CD4-positive, alpha-beta memory T cell (primary cell): ENCODE measurements at regions of chr16 and their contacts with region 1.

Region 1: DNA sequence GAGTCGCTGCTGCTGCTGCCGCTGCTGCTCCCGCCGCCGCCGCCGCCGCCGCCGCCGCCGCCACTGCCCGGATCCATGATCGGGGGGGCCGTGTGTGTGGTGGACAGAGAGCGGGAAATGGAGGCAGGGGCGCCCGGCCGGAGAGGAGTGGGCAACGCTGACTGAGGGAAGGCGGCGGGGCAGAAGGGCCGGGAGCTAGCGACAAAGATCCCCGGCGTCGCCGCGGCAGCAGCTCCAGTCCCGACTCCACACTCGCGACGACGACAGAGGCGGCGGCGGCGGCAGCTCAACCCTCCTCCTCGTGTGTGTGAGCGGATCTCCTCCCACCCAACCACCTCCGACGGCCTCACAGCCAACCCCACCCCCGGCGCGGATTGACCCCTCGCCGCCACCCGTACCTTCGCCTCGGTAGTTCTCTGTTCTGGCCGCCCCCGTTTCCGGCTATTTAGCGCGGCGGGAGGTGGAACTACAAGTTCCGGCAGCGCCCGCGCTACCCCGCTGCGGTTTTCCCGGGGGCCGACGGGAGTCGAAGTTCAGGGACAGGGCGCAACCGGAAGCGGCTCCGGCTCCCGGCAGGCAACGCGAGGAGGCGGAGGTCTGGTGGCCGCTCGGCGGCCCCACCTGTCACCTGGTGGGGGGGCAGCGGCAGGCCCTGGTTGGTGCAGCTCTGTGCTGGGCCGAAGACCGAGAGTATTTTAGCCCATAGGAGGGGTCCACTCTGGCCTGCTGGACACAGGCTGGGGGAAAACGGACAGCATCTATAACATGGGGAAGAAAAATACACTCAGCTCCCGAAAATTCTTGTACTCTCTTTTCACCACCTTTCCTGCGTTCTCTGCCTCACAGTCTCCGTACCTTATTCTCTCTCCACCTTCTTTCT is at the start of gene GSPT1:
- DNase-seq: peak; percentile 99 to 100 (median 99)
- H3K4me3 ChIP-seq: peak within 1 kb of the TSS; percentile 67 to 72
- H3K4me3 Mint-ChIP-seq: peak within 1 kb of the TSS; percentile 94 to 99 (median 98)
- H3K27ac ChIP-seq: peak within 1 kb of the TSS; percentile 72
- H3K27ac Mint-ChIP-seq: peak within 1 kb of the TSS; percentile 96 to 100 (median 97)
- H3K4me1 ChIP-seq: peaks cover 35% of the 10 kb centered on the region
- H3K4me1 Mint-ChIP-seq: peaks cover 24 to 45% (median 30%) of the 10 kb centered on the region in 4 donors
- H3K27me3 ChIP-seq: no peaks in the 10 kb centered on the region
- H3K27me3 Mint-ChIP-seq: peaks cover 0 to 2% of the 10 kb centered on the region in 2 donors
- total RNA-seq, gene GSPT1: 97.9 to 99.5 TPM

Region 2: DNA sequence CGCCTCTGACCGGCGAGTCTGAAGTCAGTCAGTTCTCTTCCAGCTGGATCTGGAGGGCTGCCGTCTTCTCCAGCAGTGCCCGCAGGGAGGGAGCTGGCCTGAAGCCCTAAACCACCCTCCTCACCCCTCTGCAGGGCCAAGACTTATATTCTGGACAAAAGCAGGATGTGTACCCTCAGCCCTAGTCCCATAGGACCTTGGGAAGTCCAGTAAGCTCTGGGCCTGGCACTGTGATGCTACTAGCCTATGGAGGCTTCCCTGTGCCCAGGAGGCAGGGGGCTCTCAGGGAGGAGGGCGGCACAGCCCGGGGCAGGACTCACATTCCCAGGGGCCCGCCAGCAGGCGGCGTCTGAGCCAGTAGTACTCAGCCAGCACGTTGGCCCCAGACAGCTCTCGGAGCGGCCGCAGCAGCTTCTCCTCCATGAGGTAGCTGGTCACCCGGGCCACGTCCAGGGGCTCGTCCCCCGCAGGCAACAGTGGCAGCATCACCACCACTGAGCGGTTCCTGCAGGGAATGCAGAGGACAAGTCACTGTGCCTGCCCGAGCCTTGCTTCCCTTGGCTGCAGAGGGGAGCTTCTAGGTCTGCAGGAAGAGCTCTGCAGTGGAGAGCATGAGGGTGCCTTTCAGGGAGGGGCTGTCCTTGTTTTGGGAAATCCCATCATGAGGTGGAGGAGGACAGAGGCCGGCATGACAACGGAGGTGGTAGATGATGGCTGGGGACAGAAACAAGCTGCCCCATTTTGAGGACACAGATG is 528.9 kb before region 1 on chr16:
- CTCF ChIA-PET with region 1: no interaction called
- POLR2A ChIA-PET with region 1: no interaction called
- intact Hi-C with region 1: no loop called
- DNase-seq: no peak
- H3K4me3 ChIP-seq: no peak overlapping the region
- H3K4me3 Mint-ChIP-seq: no peak overlapping the region
- H3K27ac ChIP-seq: no peak overlapping the region
- H3K27ac Mint-ChIP-seq: no peak overlapping the region
- H3K4me1 ChIP-seq: no peaks in the 10 kb centered on the region
- H3K4me1 Mint-ChIP-seq: peaks cover 0 to 2% (median 0%) of the 10 kb centered on the region in 4 donors
- H3K27me3 ChIP-seq: no peaks in the 10 kb centered on the region
- H3K27me3 Mint-ChIP-seq: no peaks in the 10 kb centered on the region

Region 3: DNA sequence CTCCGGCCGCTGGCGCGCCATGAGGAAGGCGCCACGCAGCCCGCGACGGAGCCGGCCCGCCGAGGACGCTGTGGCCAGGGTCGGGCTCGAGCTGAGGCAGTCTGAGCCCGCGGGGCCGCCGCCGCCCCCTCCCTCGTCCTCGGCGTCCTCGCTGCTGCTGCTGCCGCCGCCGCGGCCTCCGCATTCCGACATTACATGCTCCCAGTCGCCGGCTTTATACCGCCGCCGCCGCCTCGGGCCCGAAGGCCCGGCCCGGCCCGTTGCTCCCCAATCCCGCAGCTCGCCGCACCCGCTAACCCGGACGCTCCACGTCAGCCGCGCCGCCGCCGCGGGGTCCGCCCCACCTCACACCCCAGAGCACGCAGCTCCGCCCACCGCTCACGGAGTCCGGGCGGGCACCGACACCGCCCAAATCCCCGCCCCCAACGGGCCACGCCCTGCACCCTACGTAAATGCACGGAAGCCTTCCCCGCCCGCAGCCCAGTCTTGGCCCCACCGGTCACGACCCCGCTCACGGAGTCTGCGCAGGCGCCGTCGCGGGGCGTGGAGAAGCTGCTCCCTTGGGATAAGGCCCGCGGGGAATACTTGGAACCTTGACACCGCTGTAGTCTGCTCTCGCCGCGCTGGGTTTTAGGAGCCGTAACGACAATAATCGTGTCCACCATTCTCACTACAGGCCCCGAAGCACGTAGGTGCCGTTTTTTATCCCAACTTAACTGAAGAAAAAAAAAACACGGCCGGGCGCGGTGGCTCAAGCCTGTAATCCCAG is 173.2 kb before region 1 on chr16 and contains the start of gene TXNDC11:
- CTCF ChIA-PET with region 1: no interaction called
- POLR2A ChIA-PET with region 1: interaction called, 21 read pairs
- intact Hi-C with region 1: loop called (anchors 2 kb)
- DNase-seq: peak; percentile 98 to 100 (median 99)
- H3K4me3 ChIP-seq: peak within 1 kb of the TSS; percentile 57 to 91
- H3K4me3 Mint-ChIP-seq: peak within 1 kb of the TSS; percentile 94 to 98 (median 95)
- H3K27ac ChIP-seq: peak within 1 kb of the TSS; percentile 88
- H3K27ac Mint-ChIP-seq: peak within 1 kb of the TSS; percentile 96 to 99 (median 98)
- H3K4me1 ChIP-seq: peaks cover 53% of the 10 kb centered on the region
- H3K4me1 Mint-ChIP-seq: peaks cover 39 to 60% (median 48%) of the 10 kb centered on the region in 4 donors
- H3K27me3 ChIP-seq: no peaks in the 10 kb centered on the region
- H3K27me3 Mint-ChIP-seq: no peaks in the 10 kb centered on the region
- total RNA-seq, gene TXNDC11: 51.7 to 59.8 TPM

Region 4: DNA sequence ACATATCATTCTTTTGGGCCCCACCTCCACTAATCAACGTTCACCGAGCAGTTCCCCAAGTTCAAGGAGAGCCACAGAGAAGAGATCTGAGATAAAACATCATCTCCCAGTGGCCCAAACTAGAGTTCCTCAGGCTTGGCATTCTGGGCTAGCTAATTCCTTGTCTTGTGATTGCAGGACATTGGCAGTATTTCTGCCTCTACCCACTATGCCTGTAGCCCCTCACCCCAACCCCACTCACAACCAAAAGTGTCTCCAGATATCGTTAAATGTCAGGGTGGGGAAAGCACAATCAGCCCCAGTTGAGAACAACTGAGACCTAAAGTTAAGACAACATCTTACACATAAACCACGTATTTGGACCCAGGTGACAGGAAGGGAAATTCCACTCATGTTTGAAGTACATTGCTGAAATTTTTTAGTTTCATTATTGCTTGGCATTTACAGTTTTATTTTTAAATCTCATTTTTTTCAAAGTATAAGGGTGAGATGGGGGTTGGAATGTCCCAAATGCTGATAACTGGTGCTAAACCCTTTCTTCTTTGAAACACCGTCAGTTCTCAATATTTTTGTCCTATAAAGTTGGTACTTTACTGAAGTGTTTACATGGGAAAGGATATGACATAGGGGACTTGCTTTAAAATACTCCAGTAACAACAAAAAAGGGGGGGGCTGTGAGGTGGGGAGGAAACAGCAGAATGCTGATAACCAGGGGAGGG is 132.4 kb before region 1 on chr16:
- CTCF ChIA-PET with region 1: no interaction called
- POLR2A ChIA-PET with region 1: interaction called, 3 read pairs
- intact Hi-C with region 1: loop called (anchors 2 kb)
- DNase-seq: peak; percentile 79 to 88 (median 84)
- H3K4me3 ChIP-seq: peak overlapping the region; percentile 58 to 87
- H3K4me3 Mint-ChIP-seq: peak overlapping the region; percentile 82 to 90 (median 86)
- H3K27ac ChIP-seq: peak overlapping the region; percentile 96
- H3K27ac Mint-ChIP-seq: peak overlapping the region; percentile 97 to 100 (median 98)
- H3K4me1 ChIP-seq: peaks cover 75% of the 10 kb centered on the region
- H3K4me1 Mint-ChIP-seq: peaks cover 42 to 66% (median 53%) of the 10 kb centered on the region in 4 donors
- H3K27me3 ChIP-seq: no peaks in the 10 kb centered on the region
- H3K27me3 Mint-ChIP-seq: no peaks in the 10 kb centered on the region

Region 5: DNA sequence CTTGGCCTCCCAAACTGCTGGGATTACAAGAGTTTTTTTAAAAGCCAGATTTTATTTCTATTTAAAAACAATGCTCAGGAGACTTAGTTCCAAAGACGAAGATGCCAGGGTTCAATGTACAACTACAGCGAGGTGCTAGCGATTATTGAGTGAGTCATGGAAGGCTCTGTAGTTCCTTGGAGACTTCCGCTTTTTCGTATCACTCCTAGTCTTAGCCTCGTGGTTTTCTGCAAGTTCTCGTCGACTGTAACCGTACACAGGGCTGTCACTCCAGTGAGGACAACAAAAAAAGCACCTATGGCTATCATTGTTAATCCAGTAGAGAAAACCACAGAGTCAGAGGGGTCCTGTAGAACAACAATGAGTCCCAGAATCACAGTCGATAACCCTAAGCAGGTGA is 96.1 kb before region 1 on chr16:
- CTCF ChIA-PET with region 1: no interaction called
- POLR2A ChIA-PET with region 1: no interaction called
- intact Hi-C with region 1: no loop called
- DNase-seq: no peak
- H3K4me3 ChIP-seq: no peak overlapping the region
- H3K4me3 Mint-ChIP-seq: no peak overlapping the region
- H3K27ac ChIP-seq: no peak overlapping the region
- H3K27ac Mint-ChIP-seq: no peak overlapping the region
- H3K4me1 ChIP-seq: no peaks in the 10 kb centered on the region
- H3K4me1 Mint-ChIP-seq: no peaks in the 10 kb centered on the region
- H3K27me3 ChIP-seq: no peaks in the 10 kb centered on the region
- H3K27me3 Mint-ChIP-seq: peaks cover 0 to 2% of the 10 kb centered on the region in 2 donors

Region 6: GRCh38 chr16:11851294-11852091 is 64.4 kb before region 1 on chr16 and contains the start of gene RSL1D1:
- CTCF ChIA-PET with region 1: interaction called, 3 read pairs
- POLR2A ChIA-PET with region 1: interaction called, 5 read pairs
- intact Hi-C with region 1: loop called (anchors 1 kb)
- DNase-seq: peak; percentile 92 to 97 (median 95)
- H3K4me3 ChIP-seq: peak within 1 kb of the TSS; percentile 76 to 96
- H3K4me3 Mint-ChIP-seq: peak within 1 kb of the TSS; percentile 98 to 99 (median 99)
- H3K27ac ChIP-seq: peak within 1 kb of the TSS; percentile 94
- H3K27ac Mint-ChIP-seq: peak within 1 kb of the TSS; percentile 97 to 99 (median 98)
- H3K4me1 ChIP-seq: peaks cover 54% of the 10 kb centered on the region
- H3K4me1 Mint-ChIP-seq: peaks cover 27 to 77% (median 47%) of the 10 kb centered on the region in 4 donors
- H3K27me3 ChIP-seq: no peaks in the 10 kb centered on the region
- H3K27me3 Mint-ChIP-seq: no peaks in the 10 kb centered on the region
- total RNA-seq, gene RSL1D1: 180 to 206 TPM

Region 7: DNA sequence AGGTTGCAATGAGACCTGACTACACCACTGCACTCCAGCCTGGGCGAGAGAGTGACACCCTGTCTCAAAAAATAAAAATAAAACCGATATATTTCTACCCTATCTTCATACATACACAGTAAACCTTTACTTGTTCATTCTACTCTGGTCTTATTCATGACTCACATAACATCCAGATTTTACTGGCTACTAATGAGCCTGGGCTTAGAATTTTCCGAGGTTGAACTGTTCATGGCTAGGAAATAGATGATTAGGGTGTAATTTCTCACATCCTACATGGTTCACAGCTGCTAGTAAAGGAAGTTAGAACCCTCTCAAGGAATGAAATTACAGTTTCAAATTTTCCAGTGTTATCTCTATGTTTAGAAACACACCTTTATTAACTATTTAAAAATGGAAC is 14.8 kb before region 1 on chr16:
- CTCF ChIA-PET with region 1: interaction called, 3 read pairs
- POLR2A ChIA-PET with region 1: interaction called, 10 read pairs
- intact Hi-C with region 1: loop called (anchors 2 kb)
- DNase-seq: no peak
- H3K4me3 ChIP-seq: no peak overlapping the region
- H3K4me3 Mint-ChIP-seq: peak overlapping the region in 2 of 8 donors; percentile 14 to 43
- H3K27ac ChIP-seq: no peak overlapping the region
- H3K27ac Mint-ChIP-seq: peak overlapping the region in 4 of 7 donors; percentile 55 to 72 (median 65)
- H3K4me1 ChIP-seq: peaks cover 39% of the 10 kb centered on the region
- H3K4me1 Mint-ChIP-seq: peaks cover 33 to 65% (median 53%) of the 10 kb centered on the region in 4 donors
- H3K27me3 ChIP-seq: no peaks in the 10 kb centered on the region
- H3K27me3 Mint-ChIP-seq: no peaks in the 10 kb centered on the region

Region 8: DNA sequence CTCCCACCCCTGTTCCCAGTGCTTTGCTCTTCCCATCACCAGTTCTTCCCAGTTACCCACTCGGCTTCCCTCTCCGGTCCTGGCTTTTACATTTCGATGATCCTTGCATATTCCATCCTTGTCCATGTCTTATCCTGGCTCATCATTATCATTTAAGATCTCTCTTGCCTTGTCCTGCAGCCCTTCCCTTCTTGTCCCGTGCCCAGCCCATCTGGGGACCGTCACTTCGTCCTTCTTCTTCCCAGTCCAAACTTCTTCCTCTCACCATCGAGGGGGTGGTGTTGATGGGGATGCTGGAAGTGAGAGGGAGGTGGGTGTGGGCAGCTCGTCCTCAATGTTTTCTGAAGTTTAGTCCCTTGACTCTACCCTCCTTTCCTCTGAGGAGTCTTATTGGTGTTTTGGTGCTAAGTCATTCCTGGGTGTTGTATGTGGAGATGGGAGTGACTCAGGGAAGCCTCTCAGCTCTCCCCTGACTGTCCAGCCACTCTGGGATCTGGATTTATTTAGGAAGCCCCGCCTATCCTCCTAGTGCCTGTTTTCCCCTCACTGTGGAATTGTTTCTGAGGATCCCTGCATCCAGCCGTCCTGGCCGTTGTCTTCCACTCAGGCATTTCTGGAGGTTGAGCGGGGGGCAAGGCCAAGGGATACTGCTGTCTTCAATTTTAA is 61.6 kb after region 1 on chr16:
- CTCF ChIA-PET with region 1: interaction called, 3 read pairs
- POLR2A ChIA-PET with region 1: interaction called, 20 read pairs
- intact Hi-C with region 1: loop called (anchors 2 kb)
- DNase-seq: no peak
- H3K4me3 ChIP-seq: peak overlapping the region; percentile 84 to 93
- H3K4me3 Mint-ChIP-seq: peak overlapping the region; percentile 89 to 97 (median 94)
- H3K27ac ChIP-seq: peak overlapping the region; percentile 74
- H3K27ac Mint-ChIP-seq: peak overlapping the region; percentile 75 to 94 (median 88)
- H3K4me1 ChIP-seq: peaks cover 28% of the 10 kb centered on the region
- H3K4me1 Mint-ChIP-seq: peaks cover 28 to 39% (median 33%) of the 10 kb centered on the region in 4 donors
- H3K27me3 ChIP-seq: no peaks in the 10 kb centered on the region
- H3K27me3 Mint-ChIP-seq: no peaks in the 10 kb centered on the region

Region 9: DNA sequence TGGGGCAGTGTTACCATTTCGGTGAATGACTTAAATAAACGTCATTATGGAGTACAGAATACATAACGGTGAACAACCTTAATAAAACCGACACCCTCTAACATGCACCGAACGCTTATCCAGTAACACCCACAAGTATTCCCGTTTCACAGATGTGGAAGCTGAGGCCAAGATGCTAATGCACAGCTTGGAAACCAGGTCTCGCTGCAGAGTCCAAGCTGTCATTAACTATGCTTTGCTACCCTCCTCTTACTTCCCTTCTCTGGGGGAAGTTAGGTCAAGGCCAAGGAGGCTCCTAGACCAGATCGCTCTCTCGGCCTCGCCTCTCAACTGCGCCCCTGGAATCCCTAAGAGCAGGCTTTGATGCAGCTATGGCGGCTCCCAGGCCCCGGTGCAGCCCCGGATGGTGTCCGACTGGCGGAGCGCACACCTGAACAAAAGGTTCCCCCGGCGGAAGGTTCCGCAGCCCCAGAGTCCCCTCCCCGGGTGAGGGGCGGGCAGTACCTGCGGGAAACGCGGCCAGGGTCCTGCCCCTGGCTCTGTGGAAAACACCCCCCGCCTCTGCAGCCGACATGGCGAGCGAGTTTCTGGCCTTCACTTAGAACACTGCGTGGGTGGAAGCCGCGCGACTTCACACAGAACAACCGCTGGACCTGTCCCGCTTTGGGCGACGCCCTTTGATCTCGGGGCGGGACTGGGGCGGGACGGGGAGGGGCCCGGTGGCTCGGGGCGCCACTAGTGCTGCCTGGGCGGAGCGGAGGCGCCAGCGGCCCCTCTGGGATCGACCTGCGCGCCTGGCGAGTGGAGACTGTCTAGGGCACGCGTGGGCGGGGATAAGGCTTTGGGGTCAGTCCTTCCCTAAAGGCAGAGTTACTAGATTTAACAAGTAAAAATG is 887.6 kb after region 1 on chr16 and contains the start of gene CPPED1:
- CTCF ChIA-PET with region 1: no interaction called
- POLR2A ChIA-PET with region 1: no interaction called
- intact Hi-C with region 1: loop called (anchors 5 kb)
- DNase-seq: peak; percentile 88 to 95 (median 91)
- H3K4me3 ChIP-seq: peak within 1 kb of the TSS; percentile 68 to 83
- H3K4me3 Mint-ChIP-seq: peak within 1 kb of the TSS; percentile 91 to 97 (median 94)
- H3K27ac ChIP-seq: peak within 1 kb of the TSS; percentile 68
- H3K27ac Mint-ChIP-seq: peak within 1 kb of the TSS; percentile 90 to 97 (median 95)
- H3K4me1 ChIP-seq: peaks cover 18% of the 10 kb centered on the region
- H3K4me1 Mint-ChIP-seq: peaks cover 15 to 36% (median 20%) of the 10 kb centered on the region in 4 donors
- H3K27me3 ChIP-seq: no peaks in the 10 kb centered on the region
- H3K27me3 Mint-ChIP-seq: peaks cover 0 to 2% of the 10 kb centered on the region in 2 donors
- total RNA-seq, gene CPPED1: 7.6 to 7.9 TPM